K562 (cell line): ENCODE measurements at regions of chr15 and their contacts with region 1.

Region 1: GRCh38 chr15:86743283-86743903 is 663.7 kb downstream of the AGBL1 start:
- DNase-seq: peak in 3 of 4 experiments; percentile 8 to 13 (median 9)
- ATAC-seq: no peak
- H3K4me3 ChIP-seq: no peak overlapping the region
- H3K27ac ChIP-seq: no peak overlapping the region
- H3K4me1 ChIP-seq: no peaks in the 10 kb centered on the region
- H3K27me3 ChIP-seq: no peaks in the 10 kb centered on the region
- CTCF ChIP-seq: peak in 2 of 3 experiments; percentile 22 to 31; a peak in 1 of 6 replicates
- EP300 ChIP-seq: no peak
- POLR2A ChIP-seq: no peak
- RAD21 ChIP-seq: peak; percentile 16 to 35; a peak in 3 of 4 replicates

Region 2: DNA sequence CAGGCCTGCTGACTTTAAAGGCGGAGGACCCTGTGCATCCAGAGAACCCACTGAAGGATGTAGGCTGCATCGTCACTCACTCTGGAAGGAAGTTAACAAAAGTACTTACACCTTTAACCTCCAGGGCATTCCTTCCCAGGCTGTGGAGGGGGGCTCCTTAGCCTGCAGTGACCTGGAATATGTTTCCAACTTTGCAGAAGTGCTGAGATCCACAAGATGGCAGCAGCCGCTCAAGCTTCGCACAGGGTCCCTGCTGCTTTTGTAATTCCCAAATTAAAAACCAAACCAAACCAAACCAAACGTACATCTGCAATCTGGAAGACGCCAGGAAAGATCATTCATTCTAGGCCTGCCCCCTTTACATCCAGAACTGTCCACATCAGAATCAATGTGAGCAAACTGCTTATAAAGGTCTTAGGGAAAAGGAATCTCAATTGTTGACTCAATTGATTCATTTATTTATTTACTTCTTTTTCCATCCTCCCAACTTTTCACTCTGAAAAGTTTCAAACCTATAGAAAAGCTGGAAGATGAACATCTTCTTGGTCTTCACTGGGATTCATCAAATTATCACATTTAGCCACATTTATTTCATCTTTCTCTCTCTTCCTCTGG is 878.2 kb before region 1 on chr15:
- CTCF ChIA-PET with region 1: no interaction called
- POLR2A ChIA-PET with region 1: no interaction called
- in situ Hi-C with region 1: no loop called
- intact Hi-C with region 1: loop called (anchors 10 kb)
- DNase-seq: peak; percentile 38 to 40 (median 40)
- ATAC-seq: peak; percentile 86
- H3K4me3 ChIP-seq: no peak overlapping the region
- H3K27ac ChIP-seq: no peak overlapping the region
- H3K4me1 ChIP-seq: no peaks in the 10 kb centered on the region
- H3K27me3 ChIP-seq: no peaks in the 10 kb centered on the region
- CTCF ChIP-seq: peak; percentile 59 to 71 (median 67)
- EP300 ChIP-seq: no peak
- POLR2A ChIP-seq: no peak
- RAD21 ChIP-seq: peak; percentile 53 to 77

Region 3: GRCh38 chr15:86759800-86760523 is 16.6 kb after region 1 on chr15:
- CTCF ChIA-PET with region 1: no interaction called
- POLR2A ChIA-PET with region 1: no interaction called
- in situ Hi-C with region 1: no loop called
- intact Hi-C with region 1: no loop called
- DNase-seq: no peak
- ATAC-seq: no peak
- H3K4me3 ChIP-seq: no peak overlapping the region
- H3K27ac ChIP-seq: no peak overlapping the region
- H3K4me1 ChIP-seq: no peaks in the 10 kb centered on the region
- H3K27me3 ChIP-seq: no peaks in the 10 kb centered on the region
- CTCF ChIP-seq: no peak
- EP300 ChIP-seq: no peak
- POLR2A ChIP-seq: no peak
- RAD21 ChIP-seq: no peak